MCF 10A (cell line): ENCODE measurements at regions of chr5 and their contacts with region 1.

Region 1: GRCh38 chr5:87267574-87268125 is at the start of gene RASA1:
- DNase-seq: peak; percentile 94
- H3K4me3 Mint-ChIP-seq: peak within 1 kb of the TSS; percentile 95
- H3K27ac Mint-ChIP-seq: peak within 1 kb of the TSS; percentile 92
- H3K4me1 Mint-ChIP-seq: peaks cover 10% of the 10 kb centered on the region
- H3K27me3 Mint-ChIP-seq: no peaks in the 10 kb centered on the region
- CTCF ChIP-seq: no peak
- total RNA-seq, gene RASA1: 53.8 and 68.6 TPM in 2 replicates

Region 2: GRCh38 chr5:86797677-86798076 is 470.0 kb before region 1 on chr5:
- CTCF ChIA-PET with region 1: no interaction called
- POLR2A ChIA-PET with region 1: no interaction called
- intact Hi-C with region 1: no loop called
- DNase-seq: no peak
- H3K4me3 Mint-ChIP-seq: no peak overlapping the region
- H3K27ac Mint-ChIP-seq: no peak overlapping the region
- H3K4me1 Mint-ChIP-seq: no peaks in the 10 kb centered on the region
- H3K27me3 Mint-ChIP-seq: peaks cover 59% of the 10 kb centered on the region
- CTCF ChIP-seq: no peak

Region 3: DNA sequence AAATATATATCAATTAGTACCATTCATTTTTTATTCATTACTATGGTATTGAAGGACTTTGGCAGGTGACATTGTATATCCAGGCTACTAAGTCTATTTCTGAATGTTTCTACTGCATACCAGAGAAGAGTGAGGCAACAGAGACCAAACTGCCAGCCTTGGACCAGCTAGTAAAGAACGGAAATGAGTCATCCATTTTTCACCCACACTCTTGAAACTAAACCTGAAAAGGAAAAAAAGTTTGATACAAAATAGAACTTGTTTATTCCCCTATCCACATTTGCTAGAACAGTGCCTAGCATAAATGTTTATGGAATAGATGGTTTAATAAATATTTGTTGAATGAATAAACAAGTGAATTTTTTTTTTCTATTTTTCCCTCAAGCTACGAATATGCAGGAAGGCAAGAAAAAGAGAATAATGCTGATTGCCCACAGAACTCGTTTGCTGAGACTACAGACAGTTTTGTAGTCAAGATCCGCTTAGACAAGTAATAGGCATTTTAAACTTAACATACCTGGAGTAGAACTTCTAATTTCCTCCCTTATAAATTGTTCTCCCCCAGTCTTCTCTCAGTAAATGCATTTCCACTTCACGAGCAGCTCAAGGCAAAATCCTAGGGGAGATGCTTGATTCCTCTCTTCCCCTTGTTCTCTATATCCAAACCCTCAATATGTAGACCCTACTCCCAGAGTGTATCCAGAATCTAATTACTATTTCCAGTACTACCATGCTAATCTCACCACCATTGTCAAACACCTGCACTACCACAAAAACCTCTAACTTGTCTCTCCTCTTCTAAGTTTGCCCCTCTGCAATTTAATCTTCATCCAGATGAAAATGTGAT is 146.1 kb before region 1 on chr5:
- CTCF ChIA-PET with region 1: no interaction called
- POLR2A ChIA-PET with region 1: interaction called, 15 read pairs
- intact Hi-C with region 1: loop called (anchors 1 kb)
- DNase-seq: peak; percentile 88
- H3K4me3 Mint-ChIP-seq: peak overlapping the region; percentile 16
- H3K27ac Mint-ChIP-seq: peak overlapping the region; percentile 8
- H3K4me1 Mint-ChIP-seq: peaks cover 35% of the 10 kb centered on the region
- H3K27me3 Mint-ChIP-seq: no peaks in the 10 kb centered on the region
- CTCF ChIP-seq: no peak

Region 4: DNA sequence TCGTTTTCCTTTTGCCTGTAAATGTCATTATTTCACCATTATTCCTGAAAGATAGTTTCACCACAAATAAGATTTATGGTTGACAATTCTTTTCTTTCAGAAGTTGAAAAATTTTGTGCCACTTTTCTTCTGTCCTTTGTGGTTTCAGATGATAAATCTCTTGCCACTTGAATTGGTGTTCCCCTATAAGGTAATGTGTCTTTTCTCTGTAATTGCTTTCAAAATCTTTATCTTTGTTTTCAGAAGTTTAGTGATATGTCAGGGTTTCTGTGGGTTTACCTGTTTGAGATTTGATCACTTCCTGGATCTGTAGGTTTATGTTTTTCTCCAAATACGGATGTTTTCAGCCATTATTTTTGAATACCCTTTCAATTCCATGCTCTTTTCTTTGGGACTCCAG is 14.6 kb after region 1 on chr5:
- CTCF ChIA-PET with region 1: interaction called, 4 read pairs
- POLR2A ChIA-PET with region 1: interaction called, 23 read pairs
- intact Hi-C with region 1: no loop called
- DNase-seq: no peak
- H3K4me3 Mint-ChIP-seq: no peak overlapping the region
- H3K27ac Mint-ChIP-seq: peak overlapping the region; percentile 29
- H3K4me1 Mint-ChIP-seq: peaks cover 16% of the 10 kb centered on the region
- H3K27me3 Mint-ChIP-seq: no peaks in the 10 kb centered on the region
- CTCF ChIP-seq: no peak

Region 5: DNA sequence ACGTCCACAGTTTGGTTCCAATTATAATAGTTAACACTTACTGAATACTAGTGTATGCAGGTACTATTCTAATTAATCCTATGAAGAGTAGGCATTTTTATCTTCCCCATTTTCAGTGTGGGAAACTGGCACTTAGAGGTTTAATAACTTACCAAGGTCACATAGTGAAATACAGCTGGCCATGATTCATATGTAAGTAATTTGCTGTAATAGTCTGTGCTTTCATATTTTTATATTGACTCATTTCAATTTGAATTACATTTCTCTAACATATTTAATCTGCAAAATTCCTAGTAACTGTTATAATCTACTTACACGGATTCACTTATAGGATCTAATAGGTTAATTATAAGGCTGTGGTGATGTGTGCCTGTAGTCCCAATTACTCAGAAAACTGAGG is 125.7 kb after region 1 on chr5:
- CTCF ChIA-PET with region 1: no interaction called
- POLR2A ChIA-PET with region 1: interaction called, 5 read pairs
- intact Hi-C with region 1: loop called (anchors 5 kb)
- DNase-seq: peak; percentile 56
- H3K4me3 Mint-ChIP-seq: no peak overlapping the region
- H3K27ac Mint-ChIP-seq: peak overlapping the region; percentile 88
- H3K4me1 Mint-ChIP-seq: peaks cover 15% of the 10 kb centered on the region
- H3K27me3 Mint-ChIP-seq: no peaks in the 10 kb centered on the region
- CTCF ChIP-seq: no peak